ENCODE measurements at regions of chr18 and their contacts with region 1.

Region 1: GRCh38 chr18:35240664-35241447 is at the start of gene ZNF397:
- DNase-seq: peak; percentile 87 to 96 (median 91)
- ATAC-seq: peak; percentile 99
- H3K4me3 ChIP-seq: peak within 1 kb of the TSS; percentile 94
- H3K4me3 Mint-ChIP-seq: peak within 1 kb of the TSS; percentile 88 to 98 (median 96)
- H3K27ac ChIP-seq: peak within 1 kb of the TSS; percentile 97
- H3K27ac Mint-ChIP-seq: peak within 1 kb of the TSS; percentile 90 to 99 (median 98)
- H3K4me1 ChIP-seq: peaks cover 9 to 17% of the 10 kb centered on the region in 2 donors
- H3K4me1 Mint-ChIP-seq: peaks cover 16 to 41% (median 31%) of the 10 kb centered on the region in 7 donors
- H3K27me3 ChIP-seq: no peaks in the 10 kb centered on the region
- H3K27me3 Mint-ChIP-seq: no peaks in the 10 kb centered on the region
- total RNA-seq, gene ZNF397: 12.1 to 59.1 (median 27.6) TPM

Region 2: DNA sequence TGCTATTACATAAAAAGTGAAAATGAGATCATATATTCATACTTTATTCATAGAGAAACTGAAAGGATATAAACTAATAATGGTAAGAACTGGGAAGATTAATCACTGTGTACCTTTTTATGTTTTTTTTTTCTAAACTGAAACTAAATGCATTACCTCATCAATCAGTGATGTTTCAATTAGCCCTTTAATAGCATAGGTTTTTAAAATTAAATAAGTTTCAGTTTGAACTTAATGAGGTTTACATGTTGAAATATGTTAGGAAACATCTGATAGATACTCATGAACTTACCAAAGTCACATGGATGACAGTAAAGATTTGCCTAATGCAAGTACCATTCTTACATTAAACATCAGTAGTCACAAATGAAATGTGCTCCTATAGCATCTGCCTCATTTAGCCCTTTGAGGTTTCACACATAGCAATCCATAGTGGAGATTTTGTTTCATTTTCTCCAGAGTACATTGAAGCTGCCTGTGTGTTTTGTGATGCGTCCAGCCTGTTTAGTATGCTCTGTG is 190.8 kb before region 1 on chr18:
- CTCF ChIA-PET with region 1: no interaction called
- POLR2A ChIA-PET with region 1: no interaction called
- intact Hi-C with region 1: loop called in 1 of 2 experiments (anchors 1 kb)
- DNase-seq: no peak
- ATAC-seq: peak; percentile 32
- H3K4me3 ChIP-seq: no peak overlapping the region
- H3K4me3 Mint-ChIP-seq: peak overlapping the region; percentile 5 to 86 (median 75)
- H3K27ac ChIP-seq: peak overlapping the region; percentile 40
- H3K27ac Mint-ChIP-seq: peak overlapping the region; percentile 30 to 94 (median 86)
- H3K4me1 ChIP-seq: peaks cover 11 to 46% of the 10 kb centered on the region in 2 donors
- H3K4me1 Mint-ChIP-seq: peaks cover 48 to 90% (median 86%) of the 10 kb centered on the region in 7 donors
- H3K27me3 ChIP-seq: no peaks in the 10 kb centered on the region
- H3K27me3 Mint-ChIP-seq: no peaks in the 10 kb centered on the region

Region 3: GRCh38 chr18:35267161-35267651 is 26.4 kb after region 1 on chr18:
- CTCF ChIA-PET with region 1: interaction called, 3 read pairs
- POLR2A ChIA-PET with region 1: interaction called, 14 read pairs
- intact Hi-C with region 1: loop called in 1 of 2 experiments (anchors 1 kb)
- DNase-seq: peak; percentile 37 to 62 (median 54)
- ATAC-seq: peak; percentile 90
- H3K4me3 ChIP-seq: peak overlapping the region; percentile 78
- H3K4me3 Mint-ChIP-seq: peak overlapping the region; percentile 85 to 99 (median 97)
- H3K27ac ChIP-seq: peak overlapping the region; percentile 74
- H3K27ac Mint-ChIP-seq: peak overlapping the region; percentile 83 to 98 (median 97)
- H3K4me1 ChIP-seq: peaks cover 0 to 7% of the 10 kb centered on the region in 2 donors
- H3K4me1 Mint-ChIP-seq: peaks cover 13 to 35% (median 26%) of the 10 kb centered on the region in 7 donors
- H3K27me3 ChIP-seq: no peaks in the 10 kb centered on the region
- H3K27me3 Mint-ChIP-seq: no peaks in the 10 kb centered on the region

Region 4: DNA sequence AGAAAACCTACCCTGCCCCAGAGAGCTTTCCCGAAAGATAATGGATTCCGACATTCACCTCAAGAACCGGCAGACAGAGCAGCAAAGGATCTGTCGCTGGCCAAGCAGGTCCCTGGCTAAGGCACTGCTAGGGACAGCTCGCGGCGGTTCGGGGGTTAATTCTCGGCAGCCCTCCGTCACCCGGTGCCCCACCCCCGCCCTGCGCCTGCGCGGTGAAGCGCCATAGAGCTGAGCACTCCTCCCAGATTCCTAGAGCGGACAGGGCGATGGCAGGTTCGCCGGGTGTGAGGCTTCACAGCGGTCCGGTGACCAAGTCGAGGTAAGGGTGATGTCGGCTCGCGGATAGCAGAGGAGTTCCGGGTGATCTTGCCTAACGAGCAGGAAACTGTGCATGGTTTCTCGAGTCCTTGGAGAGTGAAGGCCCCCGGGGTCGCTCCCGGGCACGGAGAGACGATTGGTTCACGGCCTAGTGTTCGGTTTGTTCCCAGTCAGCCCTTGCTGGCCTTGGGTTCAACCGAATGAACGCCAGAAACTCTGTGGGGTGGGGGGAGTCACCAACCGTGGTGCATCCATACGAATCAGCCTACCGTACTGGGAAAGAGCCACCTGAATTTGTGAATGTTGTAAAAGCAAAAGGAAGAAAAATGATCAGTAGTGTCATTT is 49.3 kb after region 1 on chr18 and contains the start of gene ZSCAN30:
- CTCF ChIA-PET with region 1: no interaction called
- POLR2A ChIA-PET with region 1: interaction called, 17 read pairs
- intact Hi-C with region 1: loop called (anchors 1 kb)
- DNase-seq: peak; percentile 90 to 96 (median 94)
- ATAC-seq: peak; percentile 99
- H3K4me3 ChIP-seq: peak within 1 kb of the TSS; percentile 90
- H3K4me3 Mint-ChIP-seq: peak within 1 kb of the TSS; percentile 97 to 99 (median 98)
- H3K27ac ChIP-seq: peak within 1 kb of the TSS; percentile 86
- H3K27ac Mint-ChIP-seq: peak within 1 kb of the TSS; percentile 94 to 100 (median 98)
- H3K4me1 ChIP-seq: peaks cover 16 to 18% of the 10 kb centered on the region in 2 donors
- H3K4me1 Mint-ChIP-seq: peaks cover 29 to 86% (median 75%) of the 10 kb centered on the region in 7 donors
- H3K27me3 ChIP-seq: no peaks in the 10 kb centered on the region
- H3K27me3 Mint-ChIP-seq: no peaks in the 10 kb centered on the region
- total RNA-seq, gene ZSCAN30: 14.0 to 23.2 (median 20.8) TPM

Region 5: DNA sequence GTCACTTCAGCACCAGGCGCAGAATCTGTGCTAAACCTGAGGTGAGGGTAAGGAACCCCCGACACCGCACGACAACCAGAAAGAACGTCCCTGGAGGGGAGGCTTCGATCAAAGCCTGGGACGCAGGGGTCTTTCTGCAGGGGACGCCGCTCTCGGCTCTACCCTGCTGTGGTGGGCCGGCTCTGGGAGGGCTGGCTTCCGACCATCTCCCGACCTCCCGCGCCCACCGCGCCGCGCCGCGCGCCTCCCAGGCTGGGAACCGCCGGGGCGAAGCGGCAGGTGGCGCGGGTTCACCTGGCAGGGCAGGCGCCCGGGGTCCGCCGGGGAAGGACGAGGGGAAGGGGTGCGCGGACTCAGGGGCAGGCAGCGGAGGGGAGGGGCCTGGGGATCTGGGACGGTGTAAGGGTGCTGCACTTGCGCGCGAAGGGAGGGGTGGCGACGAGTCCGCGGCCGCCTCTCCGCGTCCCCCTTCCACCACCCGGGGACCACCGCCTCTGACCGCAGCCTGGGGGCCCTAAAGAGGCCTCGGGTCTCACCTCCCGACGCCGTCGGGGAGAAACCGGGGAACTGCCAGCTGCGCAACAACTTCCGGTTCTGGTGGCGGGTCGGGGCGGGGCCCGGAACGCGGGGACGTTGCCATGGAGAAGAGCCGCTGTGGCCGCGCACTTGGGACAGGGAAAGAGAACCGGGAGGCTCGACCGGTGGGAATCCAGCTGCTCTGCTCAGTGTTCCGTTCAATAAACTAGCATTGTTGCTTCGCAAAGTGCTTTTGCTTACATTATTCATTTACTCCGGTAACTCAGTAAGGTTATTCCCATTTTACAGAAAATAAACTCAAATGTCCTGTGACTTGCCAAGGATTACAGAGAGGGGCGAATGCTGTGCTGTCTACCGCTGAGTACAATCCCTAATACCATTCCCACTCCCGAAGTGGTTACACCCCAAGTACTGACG is 136.2 kb after region 1 on chr18 and contains the start of gene ZNF396:
- CTCF ChIA-PET with region 1: no interaction called
- POLR2A ChIA-PET with region 1: interaction called, 4 read pairs
- intact Hi-C with region 1: loop called in 1 of 2 experiments (anchors 1 kb)
- DNase-seq: peak; percentile 51 to 72 (median 58)
- ATAC-seq: peak; percentile 81
- H3K4me3 ChIP-seq: peak within 1 kb of the TSS; percentile 75
- H3K4me3 Mint-ChIP-seq: peak within 1 kb of the TSS; percentile 80 to 92 (median 88)
- H3K27ac ChIP-seq: peak within 1 kb of the TSS; percentile 55
- H3K27ac Mint-ChIP-seq: peak within 1 kb of the TSS; percentile 44 to 90 (median 74)
- H3K4me1 ChIP-seq: no peaks in the 10 kb centered on the region
- H3K4me1 Mint-ChIP-seq: peaks cover 3 to 12% (median 10%) of the 10 kb centered on the region in 7 donors
- H3K27me3 ChIP-seq: no peaks in the 10 kb centered on the region
- H3K27me3 Mint-ChIP-seq: peaks cover 0 to 29% (median 0%) of the 10 kb centered on the region in 5 donors
- total RNA-seq, gene ZNF396: 0.11 to 8.2 (median 0.54) TPM

Region 6: DNA sequence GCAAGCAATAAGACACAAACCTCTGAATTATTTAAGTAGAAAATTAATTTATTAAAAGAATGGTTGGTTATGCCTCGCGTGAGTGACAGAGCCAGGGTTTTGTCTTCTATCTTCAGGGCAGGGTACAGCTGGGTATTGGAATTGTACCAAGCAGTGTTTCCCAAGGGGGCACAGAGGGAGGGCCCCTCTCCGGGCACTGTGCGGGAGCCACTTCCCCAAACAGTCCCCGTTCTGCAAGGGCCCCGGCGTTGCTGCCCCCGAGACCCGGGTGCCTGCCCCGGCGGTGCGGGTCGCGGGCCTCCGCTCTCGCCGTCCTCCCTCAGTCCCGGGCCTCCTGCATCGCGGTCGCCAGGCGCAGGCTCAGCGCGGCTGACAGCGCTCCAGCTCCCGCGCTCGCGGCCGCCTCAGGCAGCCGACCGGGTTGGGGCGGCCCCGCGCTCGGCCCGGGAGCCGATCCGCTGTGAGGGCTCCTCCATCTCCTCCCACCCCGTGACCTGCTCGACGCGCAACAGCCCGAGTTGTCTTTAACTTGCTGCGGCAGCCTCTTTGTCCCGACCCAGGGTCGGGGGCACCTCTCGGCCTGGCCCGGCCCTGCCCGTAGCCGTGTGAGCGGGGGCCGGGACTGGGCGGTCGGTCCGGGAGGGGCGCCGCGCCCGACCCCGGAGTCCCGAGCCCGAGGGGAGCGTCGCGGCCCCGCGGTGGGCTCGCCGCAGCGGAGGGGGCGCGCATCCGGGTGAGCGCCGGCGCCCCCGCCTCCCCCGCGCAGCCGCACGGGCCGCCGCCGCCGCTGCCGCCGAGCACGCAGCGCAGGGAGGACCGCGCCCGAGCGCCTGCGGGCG is 340.1 kb after region 1 on chr18:
- CTCF ChIA-PET with region 1: no interaction called
- POLR2A ChIA-PET with region 1: no interaction called
- intact Hi-C with region 1: loop called (anchors 2 to 5 kb)
- DNase-seq: peak; percentile 54 to 70 (median 63)
- ATAC-seq: peak; percentile 84
- H3K4me3 ChIP-seq: peak overlapping the region; percentile 61
- H3K4me3 Mint-ChIP-seq: peak overlapping the region; percentile 60 to 80 (median 72)
- H3K27ac ChIP-seq: peak overlapping the region; percentile 77
- H3K27ac Mint-ChIP-seq: peak overlapping the region in 5 of 9 donors; percentile 37 to 80 (median 63)
- H3K4me1 ChIP-seq: peaks cover 11% of the 10 kb centered on the region in 2 donors
- H3K4me1 Mint-ChIP-seq: peaks cover 13 to 39% (median 28%) of the 10 kb centered on the region in 7 donors
- H3K27me3 ChIP-seq: no peaks in the 10 kb centered on the region
- H3K27me3 Mint-ChIP-seq: peaks cover 0 to 18% (median 7%) of the 10 kb centered on the region in 5 donors

Measured in naive thymus-derived CD4-positive, alpha-beta T cell (primary cell).